ENCODE measurements at regions of chr10 and their contacts with region 1.

Region 1: DNA sequence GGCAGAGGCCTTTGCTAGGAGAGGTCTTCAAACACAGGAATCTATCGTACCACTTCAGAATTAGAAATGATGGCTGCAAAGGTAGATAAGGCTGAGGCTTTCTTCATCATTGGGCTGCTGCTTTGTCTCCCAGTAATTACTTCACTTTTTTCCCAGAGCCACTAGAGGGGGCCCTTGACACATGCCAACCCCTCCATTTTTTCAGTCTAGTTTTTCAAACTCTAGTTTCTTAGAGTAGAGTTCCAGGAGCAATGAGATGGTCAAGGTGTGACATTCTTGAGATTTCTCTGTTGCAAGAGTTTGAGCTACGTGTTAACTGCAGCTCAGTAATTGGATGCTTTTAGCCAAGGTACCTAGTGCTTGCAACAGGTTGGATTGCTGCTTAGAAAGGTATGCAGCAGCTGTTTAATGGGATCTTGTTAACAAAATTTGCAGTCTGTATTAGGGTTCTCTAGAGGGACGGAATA is 33.8 kb upstream of the RBM20 start:
- DNase-seq: no peak
- H3K4me3 ChIP-seq: no peak overlapping the region
- H3K27ac ChIP-seq: no peak overlapping the region
- H3K4me1 ChIP-seq: no peaks in the 10 kb centered on the region
- H3K27me3 ChIP-seq: peaks cover 0 to 3% (median 0%) of the 10 kb centered on the region in 4 donors
- CTCF ChIP-seq: peak; percentile 53 to 78 (median 62)
- POLR2A ChIP-seq: no peak

Region 2: GRCh38 chr10:110811791-110812574 is 201.6 kb after region 1 on chr10:
- intact Hi-C with region 1: no loop called
- DNase-seq: no peak
- H3K4me3 ChIP-seq: no peak overlapping the region
- H3K27ac ChIP-seq: no peak overlapping the region
- H3K4me1 ChIP-seq: peaks cover 1 to 28% (median 3%) of the 10 kb centered on the region in 3 donors
- H3K27me3 ChIP-seq: no peaks in the 10 kb centered on the region
- CTCF ChIP-seq: no peak
- POLR2A ChIP-seq: no peak

Region 3: DNA sequence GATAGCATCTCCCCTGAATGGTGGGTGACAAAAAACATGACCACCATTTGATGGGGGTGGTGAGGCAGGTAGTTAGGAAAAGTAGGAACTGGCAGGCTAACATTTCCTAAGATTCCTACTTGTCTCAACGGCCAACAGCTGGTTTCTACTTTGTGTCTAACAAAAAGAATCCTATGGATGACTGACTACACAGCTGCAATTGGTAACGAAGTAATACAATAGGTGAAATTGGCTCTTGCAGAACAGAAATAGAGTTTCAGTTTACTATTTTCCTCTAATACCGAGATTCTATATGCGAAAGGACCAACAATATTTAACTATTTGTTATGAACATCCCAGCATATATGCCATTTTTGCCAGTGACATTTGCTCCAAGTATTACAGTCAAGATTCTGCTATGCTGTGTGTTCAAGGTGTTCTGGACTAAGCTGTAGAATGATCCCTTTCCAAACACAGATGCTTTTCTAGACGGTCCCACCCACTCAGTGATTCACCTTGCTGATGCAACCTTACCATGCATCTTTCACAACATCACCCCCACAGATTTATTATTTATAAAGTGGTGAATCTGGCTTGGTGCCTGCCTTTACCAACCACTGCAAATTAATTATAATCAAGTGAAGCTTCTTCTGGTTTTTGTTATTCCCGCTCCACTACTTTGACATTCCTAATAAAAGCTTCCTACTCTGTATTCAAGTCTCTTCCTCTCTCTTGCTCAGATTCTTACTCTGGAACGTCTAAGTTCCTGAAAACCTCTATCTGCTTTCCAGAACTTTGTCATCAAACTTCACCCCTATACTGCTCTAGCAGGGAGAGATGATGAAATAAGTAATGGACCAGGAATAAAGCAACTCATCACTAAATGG is 291.8 kb after region 1 on chr10:
- intact Hi-C with region 1: loop called (anchors 10 kb)
- DNase-seq: no peak
- H3K4me3 ChIP-seq: no peak overlapping the region
- H3K27ac ChIP-seq: peak overlapping the region in 3 of 4 donors; percentile 40 to 52 (median 46)
- H3K4me1 ChIP-seq: peaks cover 6 to 29% (median 8%) of the 10 kb centered on the region in 3 donors
- H3K27me3 ChIP-seq: no peaks in the 10 kb centered on the region
- CTCF ChIP-seq: no peak
- POLR2A ChIP-seq: no peak

Measured in esophagus squamous epithelium (tissue), 5 donors.